ENCODE measurements at regions of chr4 and their contacts with region 1.

Region 1: GRCh38 chr4:40719008-40719623 is 30.6 kb upstream of the NSUN7 start:
- DNase-seq: no peak
- H3K4me3 Mint-ChIP-seq: no peak overlapping the region
- H3K27ac Mint-ChIP-seq: no peak overlapping the region
- H3K4me1 Mint-ChIP-seq: peaks cover 35% of the 10 kb centered on the region
- H3K27me3 Mint-ChIP-seq: no peaks in the 10 kb centered on the region

Region 2: DNA sequence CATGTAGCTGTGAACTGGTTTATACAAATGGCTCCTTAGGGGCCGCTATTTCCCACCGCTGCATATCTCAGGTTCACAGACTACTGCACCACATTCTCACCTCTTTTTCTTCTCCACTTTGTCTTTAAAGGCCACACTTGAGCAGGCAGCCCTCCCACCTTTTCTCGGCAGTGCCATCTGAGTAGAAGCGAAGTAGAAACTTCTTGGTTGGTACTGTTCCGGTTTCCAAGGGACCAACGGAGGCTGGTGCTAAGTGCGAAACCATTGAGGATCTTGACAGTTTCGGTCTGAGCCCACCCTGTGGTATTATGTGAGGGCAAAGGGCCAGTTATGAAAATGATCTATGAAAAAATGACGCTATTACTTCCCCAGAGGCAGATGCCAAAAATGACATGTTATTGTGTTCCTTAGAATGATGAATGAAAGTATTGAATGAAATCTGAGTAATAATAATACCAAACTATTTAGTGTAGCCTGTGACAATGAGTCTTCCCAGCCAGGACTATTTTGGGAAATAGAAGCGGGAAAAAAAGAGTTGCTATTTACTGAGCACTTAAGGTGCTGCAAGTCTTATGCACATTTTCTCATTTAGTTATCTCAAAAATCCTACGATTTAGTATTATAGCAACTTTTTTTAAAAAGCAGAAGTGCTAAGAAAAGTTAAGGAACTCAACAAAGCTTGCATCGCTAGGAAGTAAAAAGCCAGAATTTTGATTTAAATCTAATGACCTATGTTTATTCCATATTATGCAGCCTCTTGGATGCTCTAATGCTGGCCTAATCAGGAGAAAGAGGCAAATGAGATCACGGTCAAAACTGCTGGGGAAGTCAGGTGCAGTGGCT is 413.6 kb before region 1 on chr4:
- intact Hi-C with region 1: no loop called
- DNase-seq: no peak
- H3K4me3 Mint-ChIP-seq: peak overlapping the region; percentile 35
- H3K27ac Mint-ChIP-seq: peak overlapping the region; percentile 82
- H3K4me1 Mint-ChIP-seq: peaks cover 75% of the 10 kb centered on the region
- H3K27me3 Mint-ChIP-seq: no peaks in the 10 kb centered on the region

Region 3: DNA sequence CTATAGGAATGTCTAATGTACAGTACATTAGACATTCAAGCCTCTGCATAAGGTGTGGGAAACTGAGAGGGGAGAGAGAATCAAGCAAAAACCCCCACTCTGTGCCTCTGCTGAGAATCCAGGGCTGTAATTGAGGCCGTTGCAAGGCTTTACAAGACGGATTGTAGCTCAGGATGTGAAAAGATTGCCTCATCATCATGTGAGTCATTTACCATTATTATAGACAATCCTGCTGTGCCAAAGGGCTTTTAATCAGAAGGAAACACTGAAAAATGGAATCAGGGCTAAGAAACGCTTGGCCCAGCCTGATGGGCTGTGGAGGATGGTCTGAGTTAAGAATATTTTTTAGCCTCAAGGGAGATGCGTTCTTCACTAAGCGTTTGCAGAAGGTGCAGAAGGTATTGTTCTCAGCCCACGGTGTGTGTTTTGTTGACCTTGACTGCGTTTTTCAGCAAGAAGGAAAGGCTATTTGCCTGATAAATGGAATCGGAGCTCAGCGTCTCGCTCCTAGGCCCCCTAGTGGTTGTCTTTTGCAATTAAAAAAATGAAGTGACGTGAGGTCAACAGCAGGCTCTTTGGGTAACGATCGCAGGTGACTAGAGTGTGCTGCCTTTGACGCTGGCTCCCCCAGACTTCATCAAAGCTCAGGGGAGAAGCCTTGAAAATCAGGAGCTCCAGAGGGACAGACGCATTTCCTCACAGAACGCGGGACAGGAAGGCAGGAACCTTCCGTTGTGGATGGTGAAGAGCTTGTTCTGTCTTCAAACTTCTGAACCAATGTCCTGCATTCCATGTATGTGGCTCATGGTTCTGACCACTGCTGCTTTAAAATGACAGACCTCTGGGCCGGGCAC is 402.1 kb before region 1 on chr4:
- intact Hi-C with region 1: loop called (anchors 2 kb)
- DNase-seq: peak; percentile 64
- H3K4me3 Mint-ChIP-seq: peak overlapping the region; percentile 83
- H3K27ac Mint-ChIP-seq: peak overlapping the region; percentile 99
- H3K4me1 Mint-ChIP-seq: peaks cover 46% of the 10 kb centered on the region
- H3K27me3 Mint-ChIP-seq: no peaks in the 10 kb centered on the region

Region 4: DNA sequence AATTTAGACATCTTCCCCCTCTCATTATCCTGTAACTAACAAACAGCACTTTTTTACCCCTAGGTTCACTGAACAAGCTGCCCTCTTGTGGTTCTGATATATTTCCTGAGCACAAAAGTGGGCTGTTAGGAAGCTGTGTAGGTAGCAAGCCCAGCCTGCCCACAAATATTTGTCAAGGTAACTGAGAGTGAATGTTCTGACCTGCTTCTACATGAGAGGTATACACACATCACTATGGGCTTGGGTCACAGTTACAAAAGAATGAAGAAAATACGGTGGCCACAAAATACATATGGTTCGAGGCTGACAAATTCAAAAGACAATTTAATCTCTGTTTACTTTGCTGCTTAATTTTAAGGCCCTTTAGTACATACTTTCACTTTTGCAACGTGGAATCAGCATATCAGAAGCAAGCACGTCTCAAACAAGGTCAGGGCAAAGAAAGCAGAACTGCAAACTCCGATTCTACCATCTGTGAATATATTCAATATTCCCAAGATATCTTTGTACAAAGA is 168.1 kb before region 1 on chr4:
- intact Hi-C with region 1: loop called (anchors 5 kb)
- DNase-seq: peak; percentile 21
- H3K4me3 Mint-ChIP-seq: peak overlapping the region; percentile 81
- H3K27ac Mint-ChIP-seq: peak overlapping the region; percentile 87
- H3K4me1 Mint-ChIP-seq: peaks cover 48% of the 10 kb centered on the region
- H3K27me3 Mint-ChIP-seq: no peaks in the 10 kb centered on the region

Region 5: DNA sequence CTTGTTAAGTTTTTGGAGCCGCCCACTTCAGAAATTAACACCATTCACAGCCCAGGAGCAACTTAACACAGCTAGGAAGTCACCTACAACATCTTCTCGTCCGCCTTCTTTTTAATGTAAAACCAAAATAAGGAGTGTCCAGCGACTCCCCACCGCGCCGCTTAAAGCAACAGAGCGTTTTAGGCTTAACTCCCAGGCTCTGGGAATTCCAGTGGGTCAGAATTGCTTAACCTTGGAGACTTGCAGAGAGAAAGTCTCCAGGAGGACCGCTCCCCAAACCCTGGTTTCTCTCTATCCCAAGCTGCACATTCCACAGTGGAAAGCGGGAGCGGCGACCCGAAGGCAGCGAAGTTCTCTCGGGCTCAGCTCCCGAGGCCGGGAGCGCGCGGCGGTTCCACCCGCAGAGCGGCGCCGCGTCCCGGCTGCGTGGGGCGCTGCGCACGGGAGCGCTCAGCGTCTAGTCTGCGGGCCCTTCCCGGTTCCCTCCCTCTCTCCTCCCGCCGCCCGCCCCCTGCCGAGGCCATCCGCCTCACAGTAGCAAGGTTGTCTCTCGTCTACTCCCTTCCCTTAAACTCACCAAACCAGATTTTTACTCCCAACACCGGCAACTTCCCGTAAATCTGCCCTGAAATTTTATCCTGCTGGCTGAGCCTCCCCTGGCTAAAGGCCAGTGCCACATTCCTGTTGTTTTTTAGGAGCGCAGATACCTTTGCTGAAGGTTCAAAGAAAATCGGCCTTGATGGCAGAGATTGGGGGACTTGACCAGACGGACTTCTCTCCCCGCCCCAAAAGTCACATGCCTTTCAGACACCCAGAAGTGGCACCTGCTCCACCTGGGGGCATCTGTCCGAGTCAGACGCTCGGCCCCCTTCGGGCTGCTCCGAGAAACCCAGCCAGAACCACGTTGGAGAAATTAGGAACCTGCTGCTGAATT is 89.4 kb before region 1 on chr4 and contains the start of gene RBM47:
- intact Hi-C with region 1: loop called (anchors 1 kb)
- DNase-seq: no peak
- H3K4me3 Mint-ChIP-seq: peak within 1 kb of the TSS; percentile 98
- H3K27ac Mint-ChIP-seq: peak within 1 kb of the TSS; percentile 90
- H3K4me1 Mint-ChIP-seq: peaks cover 41% of the 10 kb centered on the region
- H3K27me3 Mint-ChIP-seq: peaks cover 9% of the 10 kb centered on the region
- total RNA-seq, gene RBM47: 32.9 and 34.8 TPM in 2 replicates

Region 6: DNA sequence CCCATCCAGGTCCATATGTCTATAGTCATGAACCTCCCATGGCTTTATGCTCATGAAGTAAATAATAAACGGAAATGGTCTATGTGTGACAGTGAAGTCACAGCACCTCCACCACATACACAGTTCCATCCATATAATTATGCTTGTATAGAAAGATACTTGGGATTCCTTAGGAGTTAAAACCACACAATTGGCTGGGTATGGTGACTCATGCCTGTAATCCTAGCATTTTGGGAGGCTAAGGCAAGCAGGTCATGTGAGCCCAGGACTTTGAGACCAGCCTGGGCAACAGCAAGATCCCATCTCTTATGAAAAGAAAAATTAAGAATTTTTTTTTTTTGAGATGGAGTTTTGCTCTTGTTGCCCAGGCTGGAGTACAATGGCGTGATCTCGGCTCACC is 33.8 kb before region 1 on chr4:
- intact Hi-C with region 1: loop called (anchors 1 kb)
- DNase-seq: no peak
- H3K4me3 Mint-ChIP-seq: no peak overlapping the region
- H3K27ac Mint-ChIP-seq: no peak overlapping the region
- H3K4me1 Mint-ChIP-seq: peaks cover 45% of the 10 kb centered on the region
- H3K27me3 Mint-ChIP-seq: no peaks in the 10 kb centered on the region

Region 7: GRCh38 chr4:40763228-40763716 is 44.2 kb after region 1 on chr4:
- intact Hi-C with region 1: loop called (anchors 5 kb)
- DNase-seq: peak; percentile 26
- H3K4me3 Mint-ChIP-seq: no peak overlapping the region
- H3K27ac Mint-ChIP-seq: peak overlapping the region; percentile 55
- H3K4me1 Mint-ChIP-seq: peaks cover 17% of the 10 kb centered on the region
- H3K27me3 Mint-ChIP-seq: peaks cover 25% of the 10 kb centered on the region